ENCODE measurements at regions of chr17 and their contacts with region 1.

Region 1: GRCh38 chr17:14198575-14198974 is 38.1 kb downstream of the CDRT15 start:
- DNase-seq: no peak
- H3K4me3 ChIP-seq: no peak overlapping the region
- H3K27ac ChIP-seq: no peak overlapping the region
- H3K4me1 ChIP-seq: no peaks in the 10 kb centered on the region
- H3K27me3 ChIP-seq: no peaks in the 10 kb centered on the region
- CTCF ChIP-seq: no peak

Region 2: GRCh38 chr17:13114601-13115031 is 1084.0 kb before region 1 on chr17:
- CTCF ChIA-PET with region 1: no interaction called
- POLR2A ChIA-PET with region 1: interaction called, 11 read pairs
- intact Hi-C with region 1: no loop called
- DNase-seq: no peak
- H3K4me3 ChIP-seq: no peak overlapping the region
- H3K27ac ChIP-seq: no peak overlapping the region
- H3K4me1 ChIP-seq: no peaks in the 10 kb centered on the region
- H3K27me3 ChIP-seq: peaks cover 34% of the 10 kb centered on the region
- CTCF ChIP-seq: peak; percentile 57